ENCODE measurements at regions of chr2 and their contacts with region 1.

Region 1: DNA sequence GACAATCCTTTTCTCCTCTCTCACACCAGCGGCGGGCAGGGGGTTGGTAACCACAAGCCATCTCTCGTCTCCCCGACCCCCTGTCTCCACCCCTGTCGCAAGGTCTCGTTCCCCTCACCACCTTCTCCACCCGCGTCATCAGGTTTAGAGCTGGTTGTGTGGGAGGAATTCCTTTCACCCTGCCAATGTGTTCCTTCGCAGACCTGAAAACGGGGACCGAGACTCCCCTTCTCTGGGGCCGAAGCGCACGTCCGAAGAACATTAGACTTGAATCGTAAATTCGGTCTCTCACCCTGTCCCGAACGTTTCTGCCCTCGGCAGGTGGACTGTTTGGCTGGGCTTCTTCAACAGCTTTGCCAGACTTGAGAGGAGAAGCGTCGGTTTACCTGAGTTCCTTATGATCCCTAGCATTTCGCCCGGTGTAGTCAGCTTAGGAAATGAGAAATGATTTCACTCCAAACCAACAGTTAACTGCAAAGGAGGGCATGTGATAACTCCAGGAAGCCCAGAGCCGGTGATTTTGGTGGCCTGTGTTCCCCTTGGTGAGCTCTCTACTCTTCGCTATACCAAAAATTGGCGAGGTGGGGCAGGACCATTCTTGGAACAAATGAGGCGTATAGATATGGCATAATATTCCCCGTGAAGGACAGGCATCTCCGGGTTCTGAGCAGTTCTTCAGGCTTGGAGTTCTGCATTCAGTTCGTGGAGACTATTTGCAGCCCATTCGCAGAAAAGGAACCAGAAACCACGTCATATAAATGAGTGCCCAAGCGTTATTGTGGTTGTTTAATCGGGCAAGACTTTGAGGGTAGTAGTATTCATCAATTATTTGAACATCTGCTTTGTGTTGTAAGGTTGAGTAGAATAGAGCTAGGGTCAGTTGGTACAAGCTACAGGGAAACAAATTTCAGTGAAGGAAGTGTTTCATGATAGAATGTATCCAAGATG is 694 bp downstream of the CFAP36 start:
- DNase-seq: no peak
- H3K4me3 ChIP-seq: peak overlapping the region; percentile 72
- H3K27ac ChIP-seq: peak overlapping the region; percentile 59
- H3K4me1 ChIP-seq: peaks cover 4% of the 10 kb centered on the region
- H3K27me3 ChIP-seq: no peaks in the 10 kb centered on the region
- CTCF ChIP-seq: no peak

Region 2: DNA sequence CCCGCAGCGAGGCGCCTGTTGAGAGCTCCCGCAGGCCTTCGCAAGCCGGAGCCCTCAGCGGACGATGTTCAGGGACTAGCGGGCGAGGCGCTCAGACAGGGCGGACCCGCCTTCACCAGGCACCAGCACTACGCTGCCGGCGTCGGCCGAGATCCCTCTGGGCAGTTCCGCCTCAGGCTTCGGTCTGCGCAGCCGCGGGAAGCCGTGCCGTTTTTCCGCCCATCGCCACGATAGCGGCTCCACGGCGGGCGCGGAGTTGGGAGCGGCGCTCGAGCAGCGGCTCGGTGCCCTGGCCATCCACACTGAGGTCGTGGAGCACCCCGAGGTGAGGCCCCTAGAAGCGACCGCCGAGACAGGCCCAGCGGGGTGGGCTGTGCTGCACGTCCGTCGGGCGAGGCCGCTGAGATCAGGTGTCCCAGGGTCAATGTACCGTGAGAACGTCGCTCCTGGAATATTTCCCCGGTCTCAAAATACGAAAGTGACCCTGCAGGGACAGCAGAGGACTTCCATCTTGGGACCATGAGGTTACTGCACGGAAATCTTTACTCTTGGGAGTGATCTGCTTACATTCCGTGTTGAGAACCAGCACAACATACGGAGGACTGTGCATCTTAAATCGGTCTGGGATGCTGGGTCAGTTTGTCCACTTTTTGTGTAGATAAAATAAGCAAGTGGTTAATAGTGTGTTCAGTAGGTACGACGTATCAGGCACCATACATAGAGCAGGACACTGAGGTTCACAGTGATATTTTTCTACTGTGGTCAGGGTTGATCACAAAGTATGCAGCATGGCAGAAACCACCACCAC is 237.9 kb before region 1 on chr2:
- CTCF ChIA-PET with region 1: no interaction called
- POLR2A ChIA-PET with region 1: no interaction called
- intact Hi-C with region 1: loop called (anchors 10 kb)
- DNase-seq: peak; percentile 91
- H3K4me3 ChIP-seq: peak overlapping the region; percentile 61
- H3K27ac ChIP-seq: peak overlapping the region; percentile 75
- H3K4me1 ChIP-seq: peaks cover 3% of the 10 kb centered on the region
- H3K27me3 ChIP-seq: no peaks in the 10 kb centered on the region
- CTCF ChIP-seq: no peak

Region 3: DNA sequence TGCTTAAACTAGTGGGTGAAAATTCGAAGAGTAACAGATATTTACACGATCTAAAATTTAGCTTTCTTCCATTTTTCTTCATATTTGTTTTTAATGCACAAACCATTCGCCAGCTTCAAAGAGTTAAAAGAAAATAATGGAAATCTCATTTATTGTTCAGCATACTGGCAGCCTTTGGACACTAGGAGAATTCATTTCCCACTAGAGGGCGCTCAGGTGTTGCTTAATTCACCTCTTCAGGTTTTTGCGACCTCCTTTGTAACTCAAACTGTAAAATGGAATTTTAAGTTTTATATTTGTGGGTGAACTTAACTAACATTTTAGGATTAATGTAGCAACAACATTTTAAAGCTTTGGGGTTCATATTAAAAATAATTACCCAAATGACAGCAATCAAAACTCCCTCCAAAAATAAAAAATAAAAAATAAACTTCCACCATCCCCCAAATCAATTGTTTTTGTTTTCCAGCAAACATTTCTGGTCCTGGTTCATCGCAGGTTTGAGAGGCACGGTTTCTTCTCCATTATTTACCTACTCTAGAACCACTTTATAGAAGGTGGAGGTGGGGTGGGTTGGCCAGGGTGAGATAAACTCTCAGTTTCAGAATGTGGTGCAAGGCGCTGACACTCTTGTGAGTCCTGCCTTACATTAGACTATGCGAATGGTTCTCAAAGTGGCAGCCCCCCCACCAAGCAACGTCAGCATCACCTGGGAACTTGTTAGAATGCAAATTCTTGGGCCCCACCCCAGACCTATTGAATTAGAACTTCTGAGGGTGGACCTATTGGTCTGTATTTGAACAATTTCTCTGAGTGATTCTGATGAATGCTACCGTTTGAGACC is 198.2 kb after region 1 on chr2:
- CTCF ChIA-PET with region 1: no interaction called
- POLR2A ChIA-PET with region 1: no interaction called
- intact Hi-C with region 1: no loop called
- DNase-seq: peak; percentile 73
- H3K4me3 ChIP-seq: no peak overlapping the region
- H3K27ac ChIP-seq: no peak overlapping the region
- H3K4me1 ChIP-seq: no peaks in the 10 kb centered on the region
- H3K27me3 ChIP-seq: peaks cover 9% of the 10 kb centered on the region
- CTCF ChIP-seq: peak; percentile 88